ENCODE measurements at regions of chr11 and their contacts with region 1.

Region 1: DNA sequence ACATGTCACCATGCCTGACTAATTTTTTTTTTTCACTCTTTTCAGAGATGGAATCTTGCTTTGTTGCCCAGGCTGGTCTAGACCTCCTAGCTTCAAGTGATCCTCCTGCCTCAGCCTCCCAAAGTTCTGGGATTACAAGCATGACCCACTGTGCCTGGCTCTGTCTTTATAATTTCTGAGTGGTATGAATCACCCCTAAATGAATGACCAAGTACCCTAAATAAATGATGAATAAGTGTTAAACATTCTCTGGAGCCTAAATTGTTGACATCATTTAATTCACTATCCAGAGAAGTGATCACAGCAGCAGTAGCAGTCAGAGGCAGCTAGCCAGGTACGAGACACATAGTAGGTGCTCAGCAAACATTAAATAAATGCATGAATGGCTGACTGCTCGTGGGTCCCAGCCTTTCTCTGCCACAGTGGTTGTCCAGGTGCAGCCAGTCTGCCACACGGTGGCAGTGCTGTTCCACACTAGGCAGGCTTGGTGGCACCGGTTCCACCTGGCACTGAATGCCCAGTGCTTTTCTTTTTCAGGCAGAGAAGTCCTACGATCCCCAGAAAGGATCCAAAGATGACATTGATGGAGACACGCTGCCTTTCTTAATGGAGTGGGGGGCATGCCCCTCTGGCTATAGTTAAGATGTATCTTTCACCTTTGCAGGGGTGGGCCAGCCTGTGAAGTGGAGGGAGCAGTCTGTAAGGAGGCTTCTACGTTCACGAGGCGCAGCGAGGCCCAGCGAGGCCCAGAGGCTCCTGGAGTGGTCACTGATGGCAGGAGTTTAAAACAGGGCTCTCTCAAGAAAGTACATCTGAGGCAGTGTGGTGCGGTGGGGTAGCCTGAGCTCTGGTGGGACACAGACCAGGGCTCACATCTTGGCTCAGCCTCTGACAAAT is 8.7 kb upstream of the TTC12 start:
- DNase-seq: peak; percentile 53
- H3K4me3 ChIP-seq: no peak overlapping the region
- H3K27ac ChIP-seq: no peak overlapping the region
- H3K4me1 ChIP-seq: no peaks in the 10 kb centered on the region
- CTCF ChIP-seq: peak; percentile 89

Region 2: GRCh38 chr11:113289431-113290187 is 16.1 kb before region 1 on chr11:
- CTCF ChIA-PET with region 1: no interaction called
- POLR2A ChIA-PET with region 1: no interaction called
- intact Hi-C with region 1: no loop called
- DNase-seq: peak; percentile 47
- H3K4me3 ChIP-seq: no peak overlapping the region
- H3K27ac ChIP-seq: no peak overlapping the region
- H3K4me1 ChIP-seq: no peaks in the 10 kb centered on the region
- CTCF ChIP-seq: peak; percentile 84

Region 3: GRCh38 chr11:113315811-113316210 is 10.1 kb after region 1 on chr11:
- CTCF ChIA-PET with region 1: no interaction called
- POLR2A ChIA-PET with region 1: no interaction called
- intact Hi-C with region 1: no loop called
- DNase-seq: no peak
- H3K4me3 ChIP-seq: no peak overlapping the region
- H3K27ac ChIP-seq: no peak overlapping the region
- H3K4me1 ChIP-seq: peaks cover 3% of the 10 kb centered on the region
- CTCF ChIP-seq: no peak

Region 4: GRCh38 chr11:113376156-113376555 is 70.5 kb after region 1 on chr11:
- CTCF ChIA-PET with region 1: no interaction called
- POLR2A ChIA-PET with region 1: no interaction called
- intact Hi-C with region 1: no loop called
- DNase-seq: no peak
- H3K4me3 ChIP-seq: no peak overlapping the region
- H3K27ac ChIP-seq: no peak overlapping the region
- H3K4me1 ChIP-seq: no peaks in the 10 kb centered on the region
- CTCF ChIP-seq: no peak

Region 5: DNA sequence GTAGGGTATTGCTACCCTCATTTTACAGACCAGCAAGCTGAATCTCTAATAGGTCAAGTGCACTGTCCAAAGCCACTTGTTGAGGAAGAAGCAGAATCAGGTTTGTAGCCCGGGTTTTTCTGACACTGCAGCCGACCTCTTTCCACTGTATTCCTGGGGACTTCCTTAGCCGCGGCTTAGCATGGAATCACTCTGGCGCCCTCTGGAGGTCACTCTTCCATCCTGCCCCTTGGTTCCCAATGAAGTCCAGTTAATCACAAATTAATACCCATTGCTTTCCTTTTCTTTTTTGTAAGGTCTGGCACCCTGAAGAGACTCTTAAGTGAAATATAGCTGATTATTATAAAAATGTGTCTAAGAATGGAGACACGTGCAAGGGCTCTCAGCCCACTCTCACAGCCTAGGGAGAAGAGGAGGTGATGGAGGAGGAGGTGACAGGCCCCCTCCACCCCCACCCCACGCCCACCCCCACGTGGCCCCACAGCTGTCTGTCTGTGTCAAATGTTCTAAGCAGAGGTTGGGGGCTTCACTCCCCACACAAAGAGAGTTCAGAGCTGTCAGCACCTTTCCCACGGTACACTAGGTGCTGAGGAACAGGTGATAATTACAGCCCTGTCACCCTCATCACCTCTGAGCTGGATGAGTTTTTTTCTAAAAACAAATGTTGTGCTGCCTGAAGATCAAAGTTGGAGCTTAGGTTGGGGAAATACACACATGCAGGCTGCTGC is 227.2 kb after region 1 on chr11:
- CTCF ChIA-PET with region 1: interaction called, 3 read pairs
- POLR2A ChIA-PET with region 1: no interaction called
- intact Hi-C with region 1: loop called (anchors 2 kb)
- DNase-seq: peak; percentile 55
- H3K4me3 ChIP-seq: no peak overlapping the region
- H3K27ac ChIP-seq: no peak overlapping the region
- H3K4me1 ChIP-seq: no peaks in the 10 kb centered on the region
- CTCF ChIP-seq: peak; percentile 96

Region 6: DNA sequence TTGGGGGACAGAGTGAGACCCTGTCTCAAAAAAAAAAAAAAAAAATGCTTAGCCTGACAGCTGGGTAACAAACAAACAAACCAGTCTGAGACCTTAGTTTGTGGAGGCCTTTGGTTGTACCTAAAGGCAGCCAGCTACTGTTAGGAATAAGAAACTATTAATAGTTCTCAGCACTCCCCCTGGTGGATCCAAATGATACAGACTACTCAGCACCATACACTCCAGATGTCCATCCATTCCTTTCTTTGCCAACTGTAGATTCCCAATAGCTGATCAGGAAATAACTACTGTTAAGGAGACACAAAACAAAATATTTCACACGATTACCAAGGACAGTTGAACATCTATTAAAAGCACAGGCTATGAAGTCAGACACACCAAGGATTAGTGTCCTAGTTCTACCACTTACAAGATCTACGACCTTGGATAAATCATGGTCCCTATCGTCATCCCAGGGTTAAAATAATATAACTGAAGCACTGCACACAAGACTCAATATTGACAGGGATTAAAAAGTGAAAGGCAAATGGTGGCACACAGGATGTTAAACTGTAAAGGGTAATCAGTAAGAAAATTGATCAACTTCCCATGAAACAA is 491.1 kb after region 1 on chr11:
- CTCF ChIA-PET with region 1: no interaction called
- POLR2A ChIA-PET with region 1: no interaction called
- intact Hi-C with region 1: loop called (anchors 5 kb)
- DNase-seq: peak; percentile 37
- H3K4me3 ChIP-seq: no peak overlapping the region
- H3K27ac ChIP-seq: no peak overlapping the region
- H3K4me1 ChIP-seq: no peaks in the 10 kb centered on the region
- CTCF ChIP-seq: peak; percentile 82